CD4-positive, alpha-beta memory T cell (primary cell): ENCODE measurements at regions of chr6 and their contacts with region 1.

Region 1: DNA sequence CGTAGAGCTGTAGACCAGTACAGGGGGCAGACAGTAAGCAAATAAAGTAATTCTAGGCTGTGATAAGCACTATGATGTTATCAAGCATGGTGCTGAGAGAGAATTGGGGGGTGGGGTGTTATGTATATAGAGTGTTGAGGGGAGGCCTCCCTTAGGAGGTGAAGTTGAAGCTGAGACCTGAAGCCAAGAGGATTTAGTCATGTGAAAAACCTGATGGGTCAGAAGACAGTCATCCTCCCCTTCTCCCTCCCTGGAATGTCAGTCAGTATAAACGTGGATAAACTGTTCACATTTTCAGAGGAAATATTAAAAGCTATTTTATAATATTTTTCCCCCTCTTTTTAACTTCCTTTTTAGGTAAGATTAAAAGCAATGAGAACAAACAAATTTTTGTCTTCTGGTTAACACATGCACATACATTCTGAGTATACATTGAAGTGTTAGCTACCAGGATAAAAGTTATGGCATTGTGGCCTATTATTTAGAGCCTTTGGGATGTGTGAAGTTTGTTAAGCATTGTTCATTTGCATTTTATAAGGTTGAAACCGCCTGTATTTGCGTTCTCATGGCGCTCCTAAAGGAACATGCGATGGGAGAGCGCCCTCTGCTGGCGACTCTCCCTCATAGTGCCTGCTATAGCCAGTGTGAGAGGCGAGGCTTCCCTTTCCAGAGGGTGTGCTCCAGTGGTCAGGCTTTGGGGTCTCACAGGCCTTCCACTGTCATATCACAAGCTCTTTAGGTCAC is 35.4 kb upstream of the MAPK13 start:
- DNase-seq: peak; percentile 73 to 77 (median 75)
- H3K4me3 ChIP-seq: no peak overlapping the region
- H3K4me3 Mint-ChIP-seq: peak overlapping the region in 1 of 8 donors; percentile 18
- H3K27ac ChIP-seq: peak overlapping the region; percentile 39
- H3K27ac Mint-ChIP-seq: peak overlapping the region; percentile 28 to 93 (median 79)
- H3K4me1 ChIP-seq: peaks cover 28% of the 10 kb centered on the region
- H3K4me1 Mint-ChIP-seq: peaks cover 19 to 28% (median 25%) of the 10 kb centered on the region in 4 donors
- H3K27me3 ChIP-seq: no peaks in the 10 kb centered on the region
- H3K27me3 Mint-ChIP-seq: no peaks in the 10 kb centered on the region

Region 2: GRCh38 chr6:35786810-35787209 is 308.1 kb before region 1 on chr6:
- CTCF ChIA-PET with region 1: no interaction called
- POLR2A ChIA-PET with region 1: no interaction called
- intact Hi-C with region 1: no loop called
- DNase-seq: no peak
- H3K4me3 ChIP-seq: no peak overlapping the region
- H3K4me3 Mint-ChIP-seq: no peak overlapping the region
- H3K27ac ChIP-seq: no peak overlapping the region
- H3K27ac Mint-ChIP-seq: no peak overlapping the region
- H3K4me1 ChIP-seq: no peaks in the 10 kb centered on the region
- H3K4me1 Mint-ChIP-seq: no peaks in the 10 kb centered on the region
- H3K27me3 ChIP-seq: peaks cover 8% of the 10 kb centered on the region
- H3K27me3 Mint-ChIP-seq: peaks cover 41 to 50% of the 10 kb centered on the region in 2 donors

Region 3: DNA sequence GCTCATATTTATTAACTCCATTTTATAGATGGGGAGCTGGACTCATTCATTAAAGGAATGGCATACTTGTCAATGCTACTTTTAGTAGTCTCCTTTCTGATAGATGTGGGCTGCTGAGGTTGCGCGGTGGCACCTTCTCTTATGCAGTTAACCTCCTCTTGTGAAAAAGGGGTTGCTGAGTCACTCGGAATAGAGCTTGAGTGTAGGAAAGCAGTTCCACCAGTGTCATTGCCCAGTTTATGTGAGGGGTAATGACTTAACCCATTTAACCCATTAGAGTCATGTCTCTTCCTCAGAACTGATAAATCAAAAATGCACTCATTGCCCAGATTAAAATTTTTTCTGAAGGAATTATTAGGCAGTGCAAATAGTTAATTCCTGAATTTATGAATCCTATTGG is 61.0 kb before region 1 on chr6:
- CTCF ChIA-PET with region 1: interaction called, 144 read pairs
- POLR2A ChIA-PET with region 1: interaction called, 108 read pairs
- intact Hi-C with region 1: no loop called
- DNase-seq: no peak
- H3K4me3 ChIP-seq: no peak overlapping the region
- H3K4me3 Mint-ChIP-seq: peak overlapping the region in 5 of 8 donors; percentile 8 to 58 (median 43)
- H3K27ac ChIP-seq: no peak overlapping the region
- H3K27ac Mint-ChIP-seq: peak overlapping the region in 1 of 7 donors; percentile 36
- H3K4me1 ChIP-seq: peaks cover 88% of the 10 kb centered on the region
- H3K4me1 Mint-ChIP-seq: peaks cover 55 to 87% (median 71%) of the 10 kb centered on the region in 4 donors
- H3K27me3 ChIP-seq: no peaks in the 10 kb centered on the region
- H3K27me3 Mint-ChIP-seq: no peaks in the 10 kb centered on the region

Region 4: DNA sequence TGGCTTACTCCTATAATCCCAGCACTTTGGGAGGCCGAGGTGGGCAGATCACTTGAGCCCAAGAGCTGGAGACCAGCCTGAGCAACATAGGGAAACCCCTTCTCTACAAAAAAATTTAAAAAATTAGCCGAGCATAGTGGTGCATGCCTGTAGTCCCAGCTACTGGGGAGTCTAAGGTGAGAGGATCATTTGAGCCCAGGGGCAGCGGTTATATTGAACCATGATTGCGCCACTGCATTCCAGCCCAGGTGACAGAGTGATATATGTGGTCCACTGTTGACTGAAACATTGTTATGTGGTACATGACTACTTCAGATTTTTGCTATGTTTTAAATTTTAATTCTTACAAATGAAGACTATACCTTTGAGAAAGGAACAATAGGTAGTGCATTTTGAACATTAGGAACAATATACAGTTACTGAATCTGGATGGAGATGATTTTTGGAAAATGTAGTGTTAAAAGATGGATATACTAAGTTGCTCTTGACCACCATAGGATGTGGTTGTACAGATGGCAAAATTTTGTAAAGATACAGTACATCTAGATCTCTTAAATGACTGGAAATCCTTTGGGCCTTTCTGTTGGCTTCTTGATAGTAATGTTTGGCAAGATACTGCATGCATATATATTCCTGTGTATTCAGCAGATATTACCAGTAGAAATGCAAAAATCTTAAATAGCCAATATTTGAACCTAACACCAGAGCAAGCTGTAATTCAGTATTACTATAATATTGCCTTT is 31.4 kb before region 1 on chr6:
- CTCF ChIA-PET with region 1: interaction called, 13 read pairs
- POLR2A ChIA-PET with region 1: interaction called, 3 read pairs
- intact Hi-C with region 1: no loop called
- DNase-seq: no peak
- H3K4me3 ChIP-seq: no peak overlapping the region
- H3K4me3 Mint-ChIP-seq: no peak overlapping the region
- H3K27ac ChIP-seq: no peak overlapping the region
- H3K27ac Mint-ChIP-seq: peak overlapping the region in 2 of 7 donors; percentile 17 to 39
- H3K4me1 ChIP-seq: peaks cover 36% of the 10 kb centered on the region
- H3K4me1 Mint-ChIP-seq: peaks cover 43 to 77% (median 59%) of the 10 kb centered on the region in 4 donors
- H3K27me3 ChIP-seq: no peaks in the 10 kb centered on the region
- H3K27me3 Mint-ChIP-seq: no peaks in the 10 kb centered on the region

Region 5: GRCh38 chr6:36083446-36083845 is 11.5 kb before region 1 on chr6:
- CTCF ChIA-PET with region 1: interaction called, 43 read pairs
- POLR2A ChIA-PET with region 1: interaction called, 7 read pairs
- intact Hi-C with region 1: no loop called
- DNase-seq: no peak
- H3K4me3 ChIP-seq: no peak overlapping the region
- H3K4me3 Mint-ChIP-seq: no peak overlapping the region
- H3K27ac ChIP-seq: no peak overlapping the region
- H3K27ac Mint-ChIP-seq: no peak overlapping the region
- H3K4me1 ChIP-seq: no peaks in the 10 kb centered on the region
- H3K4me1 Mint-ChIP-seq: peaks cover 0 to 8% (median 3%) of the 10 kb centered on the region in 4 donors
- H3K27me3 ChIP-seq: no peaks in the 10 kb centered on the region
- H3K27me3 Mint-ChIP-seq: no peaks in the 10 kb centered on the region

Region 6: GRCh38 chr6:36114798-36115408 is 20.0 kb after region 1 on chr6:
- CTCF ChIA-PET with region 1: interaction called, 27 read pairs
- POLR2A ChIA-PET with region 1: interaction called, 3 read pairs
- intact Hi-C with region 1: loop called (anchors 2 kb)
- DNase-seq: peak in 2 of 5 donors; percentile 35 to 41
- H3K4me3 ChIP-seq: peak overlapping the region in 1 of 2 donors; percentile 21
- H3K4me3 Mint-ChIP-seq: peak overlapping the region; percentile 7 to 92 (median 77)
- H3K27ac ChIP-seq: peak overlapping the region; percentile 42
- H3K27ac Mint-ChIP-seq: peak overlapping the region; percentile 88 to 96 (median 95)
- H3K4me1 ChIP-seq: peaks cover 80% of the 10 kb centered on the region
- H3K4me1 Mint-ChIP-seq: peaks cover 53 to 76% (median 66%) of the 10 kb centered on the region in 4 donors
- H3K27me3 ChIP-seq: no peaks in the 10 kb centered on the region
- H3K27me3 Mint-ChIP-seq: no peaks in the 10 kb centered on the region

Region 7: GRCh38 chr6:36131511-36132245 is 36.8 kb after region 1 on chr6:
- CTCF ChIA-PET with region 1: interaction called, 19 read pairs
- POLR2A ChIA-PET with region 1: interaction called, 8 read pairs
- intact Hi-C with region 1: loop called (anchors 2 kb)
- DNase-seq: peak; percentile 43 to 79 (median 48)
- H3K4me3 ChIP-seq: peak overlapping the region; percentile 58 to 85
- H3K4me3 Mint-ChIP-seq: peak overlapping the region; percentile 87 to 91 (median 88)
- H3K27ac ChIP-seq: peak overlapping the region; percentile 86
- H3K27ac Mint-ChIP-seq: peak overlapping the region; percentile 88 to 93 (median 91)
- H3K4me1 ChIP-seq: peaks cover 52% of the 10 kb centered on the region
- H3K4me1 Mint-ChIP-seq: peaks cover 33 to 50% (median 43%) of the 10 kb centered on the region in 4 donors
- H3K27me3 ChIP-seq: no peaks in the 10 kb centered on the region
- H3K27me3 Mint-ChIP-seq: no peaks in the 10 kb centered on the region

Region 8: DNA sequence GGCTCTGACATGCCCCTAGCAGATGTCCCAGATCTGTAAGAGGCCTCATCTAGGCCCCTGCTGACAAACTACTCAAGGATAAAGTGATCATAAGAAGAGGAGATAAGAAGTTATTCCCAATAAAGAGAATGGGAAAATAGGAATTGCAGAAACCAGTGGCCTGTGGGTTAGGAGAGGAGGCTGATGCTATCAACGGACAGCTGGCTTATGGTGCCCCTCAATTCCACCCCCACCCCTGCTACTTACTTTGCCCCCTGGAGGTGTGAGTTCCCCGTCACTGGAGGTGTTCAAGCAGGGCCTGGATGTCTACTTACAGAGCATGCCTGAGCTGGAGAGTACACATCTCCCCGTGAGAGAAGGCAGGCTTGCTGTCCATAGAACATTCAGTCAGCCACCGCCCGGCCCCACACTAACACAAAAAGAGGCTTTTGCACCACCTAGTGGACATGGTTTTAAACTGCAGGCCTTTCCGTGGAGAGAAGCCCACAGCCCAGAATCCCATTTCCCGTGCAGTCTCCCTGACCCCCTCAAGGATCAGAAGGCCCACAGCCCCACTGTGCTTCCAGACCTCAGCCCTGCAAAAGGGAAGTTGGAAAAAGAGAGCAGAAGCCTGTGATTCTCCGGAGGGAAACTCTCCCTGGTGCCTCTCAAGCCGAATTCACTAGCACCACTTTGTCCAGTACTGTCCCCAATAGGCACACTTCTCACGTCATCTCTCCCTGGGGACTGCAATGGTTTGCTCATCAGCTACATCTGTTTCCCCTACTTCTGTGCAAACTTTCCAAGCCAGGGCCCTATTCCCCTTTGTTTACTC is 265.5 kb after region 1 on chr6:
- CTCF ChIA-PET with region 1: interaction called, 7 read pairs
- POLR2A ChIA-PET with region 1: no interaction called
- intact Hi-C with region 1: loop called (anchors 1 kb)
- DNase-seq: peak; percentile 63 to 73 (median 69)
- H3K4me3 ChIP-seq: no peak overlapping the region
- H3K4me3 Mint-ChIP-seq: peak overlapping the region in 1 of 8 donors; percentile 36
- H3K27ac ChIP-seq: no peak overlapping the region
- H3K27ac Mint-ChIP-seq: no peak overlapping the region
- H3K4me1 ChIP-seq: peaks cover 7% of the 10 kb centered on the region
- H3K4me1 Mint-ChIP-seq: peaks cover 2 to 9% (median 5%) of the 10 kb centered on the region in 4 donors
- H3K27me3 ChIP-seq: no peaks in the 10 kb centered on the region
- H3K27me3 Mint-ChIP-seq: peaks cover 0 to 3% of the 10 kb centered on the region in 2 donors